ENCODE measurements at regions of chr13 and their contacts with region 1.

Region 1: GRCh38 chr13:19071161-19071936 is 110.3 kb downstream of the TUBA3C start:
- DNase-seq: no peak
- ATAC-seq: no peak
- H3K4me3 ChIP-seq: no peak overlapping the region
- H3K27ac ChIP-seq: no peak overlapping the region
- H3K4me1 ChIP-seq: no peaks in the 10 kb centered on the region
- H3K27me3 ChIP-seq: no peaks in the 10 kb centered on the region
- CTCF ChIP-seq: no peak
- EP300 ChIP-seq: no peak
- POLR2A ChIP-seq: no peak
- RAD21 ChIP-seq: no peak

Region 2: GRCh38 chr13:19023115-19023514 is 48.2 kb before region 1 on chr13:
- CTCF ChIA-PET with region 1: no interaction called
- POLR2A ChIA-PET with region 1: no interaction called
- in situ Hi-C with region 1: no loop called
- intact Hi-C with region 1: loop called (anchors 10 kb)
- DNase-seq: no peak
- ATAC-seq: no peak
- H3K4me3 ChIP-seq: no peak overlapping the region
- H3K27ac ChIP-seq: no peak overlapping the region
- H3K4me1 ChIP-seq: no peaks in the 10 kb centered on the region
- H3K27me3 ChIP-seq: no peaks in the 10 kb centered on the region
- CTCF ChIP-seq: no peak
- EP300 ChIP-seq: no peak
- POLR2A ChIP-seq: no peak
- RAD21 ChIP-seq: no peak

Region 3: DNA sequence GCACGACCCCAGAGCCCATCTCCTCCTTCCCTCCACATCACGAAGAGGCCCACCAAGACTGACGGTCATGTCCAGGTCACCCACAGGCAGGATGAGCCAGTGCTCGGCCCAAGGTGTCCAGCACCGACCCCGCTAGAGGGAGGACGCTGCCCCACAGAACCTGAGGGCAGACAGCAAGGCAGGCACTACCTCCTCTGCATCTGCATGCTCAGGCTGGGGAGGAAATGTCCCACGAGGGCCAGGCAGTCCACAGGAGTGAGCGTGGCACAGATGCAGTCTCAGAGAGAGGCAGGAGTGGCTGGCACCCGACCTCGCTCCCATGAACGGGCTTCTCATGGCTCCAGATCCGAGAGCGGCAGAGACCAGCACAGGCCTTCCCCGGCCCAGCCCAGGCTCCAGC is 23.0 kb before region 1 on chr13:
- CTCF ChIA-PET with region 1: no interaction called
- POLR2A ChIA-PET with region 1: no interaction called
- in situ Hi-C with region 1: no loop called
- intact Hi-C with region 1: no loop called
- DNase-seq: no peak
- ATAC-seq: no peak; the same call in 2 of the 3 replicates
- H3K4me3 ChIP-seq: no peak overlapping the region
- H3K27ac ChIP-seq: no peak overlapping the region
- H3K4me1 ChIP-seq: no peaks in the 10 kb centered on the region
- H3K27me3 ChIP-seq: peaks cover 0 to 10% of the 10 kb centered on the region in 2 experiments; a peak in 1 of 5 replicates
- CTCF ChIP-seq: no peak
- EP300 ChIP-seq: no peak
- POLR2A ChIP-seq: no peak
- RAD21 ChIP-seq: no peak

Region 4: GRCh38 chr13:19681517-19681916 is 610.2 kb after region 1 on chr13:
- CTCF ChIA-PET with region 1: no interaction called
- POLR2A ChIA-PET with region 1: no interaction called
- in situ Hi-C with region 1: no loop called
- intact Hi-C with region 1: loop called (anchors 10 kb)
- DNase-seq: no peak
- ATAC-seq: no peak
- H3K4me3 ChIP-seq: no peak overlapping the region
- H3K27ac ChIP-seq: no peak overlapping the region
- H3K4me1 ChIP-seq: no peaks in the 10 kb centered on the region
- H3K27me3 ChIP-seq: no peaks in the 10 kb centered on the region
- CTCF ChIP-seq: no peak
- EP300 ChIP-seq: no peak
- POLR2A ChIP-seq: no peak
- RAD21 ChIP-seq: no peak

Region 5: DNA sequence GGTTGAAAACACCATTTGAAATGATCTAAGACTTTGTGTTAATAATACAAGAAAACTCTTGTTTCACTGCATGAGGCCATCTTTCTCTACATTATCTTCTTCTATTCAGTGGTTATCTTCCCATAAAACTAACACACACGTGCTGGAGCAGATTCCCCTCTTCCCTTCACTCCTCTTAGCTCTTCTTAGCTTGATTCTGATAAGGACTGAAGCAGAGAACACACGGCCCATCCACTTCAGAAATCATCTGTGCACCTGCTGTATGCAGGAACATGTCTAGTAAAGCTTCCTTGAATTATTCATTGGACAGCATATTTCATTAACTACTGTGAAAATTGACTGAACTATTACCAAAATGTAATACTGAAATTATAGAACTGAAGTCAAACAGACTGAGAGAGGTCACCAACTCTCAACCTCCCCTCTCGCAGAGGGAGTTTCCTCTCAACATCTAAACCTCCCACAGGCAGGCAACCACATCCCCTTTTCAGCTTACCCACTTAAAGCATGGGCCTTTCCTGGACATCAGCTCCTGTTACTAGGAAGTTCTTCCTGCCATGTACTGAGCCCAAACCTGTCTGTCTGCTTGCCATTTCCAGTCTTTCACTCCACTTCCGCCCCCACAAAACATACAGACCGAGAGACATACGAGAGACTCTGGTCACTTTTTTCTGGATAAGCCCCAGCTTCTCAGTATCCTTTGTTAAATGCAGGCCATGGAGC is 1340.5 kb after region 1 on chr13:
- CTCF ChIA-PET with region 1: no interaction called
- POLR2A ChIA-PET with region 1: no interaction called
- in situ Hi-C with region 1: no loop called
- intact Hi-C with region 1: no loop called
- DNase-seq: no peak
- ATAC-seq: no peak
- H3K4me3 ChIP-seq: no peak overlapping the region
- H3K27ac ChIP-seq: no peak overlapping the region
- H3K4me1 ChIP-seq: peaks cover 0 to 9% of the 10 kb centered on the region in 2 experiments; a peak in 1 of 5 replicates
- H3K27me3 ChIP-seq: peaks cover 0 to 36% of the 10 kb centered on the region in 2 experiments; a peak in 3 of 5 replicates
- CTCF ChIP-seq: no peak
- EP300 ChIP-seq: no peak
- POLR2A ChIP-seq: no peak
- RAD21 ChIP-seq: no peak

Measured in K562 (cell line).